ENCODE measurements at regions of chr17 and their contacts with region 1.

Region 1: DNA sequence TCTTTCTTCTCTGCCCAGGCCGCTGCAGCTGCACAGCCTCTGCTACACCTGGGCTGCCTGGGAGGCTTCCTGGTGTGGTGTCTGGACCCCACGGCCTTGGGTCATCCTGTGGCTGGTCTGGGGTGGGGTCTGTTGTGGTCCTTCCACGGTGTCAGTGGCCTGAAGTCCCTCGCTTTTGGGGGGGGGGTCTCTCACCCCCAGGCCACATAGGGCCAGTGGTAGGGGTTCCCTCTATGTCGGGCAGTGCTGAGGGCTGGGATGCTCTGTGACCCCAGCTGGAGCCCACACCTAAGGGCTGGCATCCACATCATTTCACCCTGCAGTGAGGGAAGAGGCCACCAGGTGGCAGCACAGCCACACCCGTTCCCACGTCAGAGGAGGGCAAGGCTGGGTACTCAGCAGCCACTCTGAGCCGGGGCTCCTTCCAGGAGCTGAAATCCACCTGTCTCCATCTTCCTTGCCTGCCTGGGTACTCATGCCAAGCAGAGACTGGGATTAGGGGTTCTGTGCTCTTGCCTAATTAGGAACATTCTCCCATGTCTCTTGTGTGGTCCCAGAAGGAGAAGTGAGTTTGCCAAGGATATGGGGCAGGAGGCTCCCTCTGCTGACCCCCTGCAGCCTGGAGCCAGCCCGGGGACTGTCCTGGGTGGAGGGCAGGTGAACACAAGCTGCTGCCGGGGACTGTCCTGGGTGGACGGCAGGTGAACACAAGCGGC is 13.0 kb downstream of the ENGASE start:
- DNase-seq: peak; percentile 68 to 96
- ATAC-seq: peak; percentile 70 to 90
- H3K4me3 ChIP-seq: no peak overlapping the region
- H3K27ac ChIP-seq: no peak overlapping the region
- H3K4me1 ChIP-seq: no peaks in the 10 kb centered on the region
- CTCF ChIP-seq: peak; percentile 95
- EP300 ChIP-seq: no peak
- POLR2A ChIP-seq: no peak
- RAD21 ChIP-seq: peak; percentile 88 to 89

Region 2: DNA sequence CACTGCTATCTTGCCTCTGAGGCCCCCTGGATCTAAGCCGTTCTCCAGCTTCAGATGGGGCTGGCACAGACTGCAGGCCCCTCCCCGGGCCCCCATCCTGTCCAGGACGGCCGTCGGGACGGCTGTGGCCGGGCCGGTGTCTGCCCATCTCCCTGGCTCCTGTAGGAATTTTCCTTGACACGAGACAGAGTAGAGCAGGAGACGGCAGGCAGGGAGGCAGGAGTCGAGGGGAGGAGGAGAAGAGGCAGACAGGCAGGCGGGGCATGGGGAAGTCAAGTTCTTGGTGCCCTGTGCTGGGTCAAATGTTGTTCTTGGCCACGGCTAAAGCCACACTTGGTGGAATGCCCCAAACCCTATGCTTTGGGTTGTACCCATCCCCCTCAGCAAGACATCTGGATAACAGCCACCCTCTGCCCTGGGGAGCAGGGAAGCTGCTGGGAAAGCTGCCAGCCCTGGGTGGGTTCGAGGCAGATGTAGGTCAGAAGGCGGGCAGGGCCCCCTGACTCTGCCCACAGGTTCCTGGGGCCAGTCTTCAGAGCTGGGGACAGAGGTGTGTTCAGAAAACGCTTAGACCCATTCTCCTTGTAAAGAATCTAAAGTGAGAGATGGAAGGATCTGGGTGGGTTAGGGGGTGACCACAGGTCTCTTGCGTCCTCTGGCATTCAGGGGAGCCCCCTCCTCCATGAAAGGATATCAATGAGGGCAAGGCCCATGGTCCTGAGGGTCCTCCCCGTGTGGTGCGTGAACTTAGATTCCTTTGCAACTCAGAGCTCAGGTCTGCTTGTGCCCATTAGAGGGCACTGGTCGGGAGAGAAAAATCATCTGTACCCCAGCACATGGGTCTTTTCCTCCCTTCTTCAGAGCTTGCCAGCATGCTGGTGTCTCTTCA is 59.4 kb before region 1 on chr17:
- CTCF ChIA-PET with region 1: interaction called, 200 read pairs
- POLR2A ChIA-PET with region 1: no interaction called
- DNase-seq: no peak
- ATAC-seq: peak in 1 of 2 experiments; percentile 34; a peak in 3 of 6 replicates
- H3K4me3 ChIP-seq: no peak overlapping the region
- H3K27ac ChIP-seq: peak overlapping the region; percentile 78 to 88
- H3K4me1 ChIP-seq: peaks cover 51% of the 10 kb centered on the region
- CTCF ChIP-seq: peak; percentile 48; the same call in 1 of the 3 replicates
- EP300 ChIP-seq: no peak
- POLR2A ChIP-seq: no peak
- RAD21 ChIP-seq: 0 out of 5 replicates have a peak, but pooled peaks have one; percentile 27 to 32

Region 3: GRCh38 chr17:79057737-79058385 is 29.7 kb before region 1 on chr17:
- CTCF ChIA-PET with region 1: interaction called, 289 read pairs
- POLR2A ChIA-PET with region 1: no interaction called
- DNase-seq: no peak
- ATAC-seq: peak; percentile 25 to 39; a peak in 1 of 6 replicates
- H3K4me3 ChIP-seq: no peak overlapping the region
- H3K27ac ChIP-seq: no peak overlapping the region
- H3K4me1 ChIP-seq: no peaks in the 10 kb centered on the region
- CTCF ChIP-seq: no peak
- EP300 ChIP-seq: no peak
- POLR2A ChIP-seq: no peak
- RAD21 ChIP-seq: no peak

Region 4: GRCh38 chr17:79102214-79102613 is 14.6 kb after region 1 on chr17:
- CTCF ChIA-PET with region 1: interaction called, 52 read pairs
- POLR2A ChIA-PET with region 1: interaction called, 3 read pairs
- DNase-seq: no peak
- ATAC-seq: no peak
- H3K4me3 ChIP-seq: no peak overlapping the region
- H3K27ac ChIP-seq: no peak overlapping the region
- H3K4me1 ChIP-seq: 0 out of 3 replicates have a peak, but pooled peaks cover 4% of the 10 kb centered on the region
- CTCF ChIP-seq: no peak
- EP300 ChIP-seq: no peak
- POLR2A ChIP-seq: no peak
- RAD21 ChIP-seq: no peak

Region 5: DNA sequence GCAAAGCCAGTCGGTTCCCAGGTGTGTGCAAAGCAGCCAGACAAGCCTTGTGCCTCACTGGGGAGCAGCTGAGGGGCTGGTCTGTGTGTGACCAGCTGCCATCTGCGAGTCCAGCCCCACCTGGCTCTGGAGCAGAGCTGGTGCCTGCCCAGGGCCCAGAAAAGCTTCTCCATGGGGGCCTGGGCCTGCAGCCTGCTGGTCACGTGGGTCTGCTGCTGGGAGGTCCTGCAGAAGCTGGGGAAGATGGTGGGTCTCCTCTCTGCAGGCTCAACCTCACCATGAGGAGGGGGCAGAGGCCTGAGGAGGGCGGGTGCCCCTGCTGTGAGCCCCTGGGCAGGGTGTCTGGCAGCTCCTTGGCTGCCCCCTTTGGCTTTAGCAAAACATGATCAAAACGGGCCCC is 59.0 kb after region 1 on chr17:
- CTCF ChIA-PET with region 1: interaction called, 11 read pairs
- POLR2A ChIA-PET with region 1: no interaction called
- DNase-seq: no peak
- ATAC-seq: no peak
- H3K4me3 ChIP-seq: no peak overlapping the region
- H3K27ac ChIP-seq: no peak overlapping the region
- H3K4me1 ChIP-seq: peaks cover 10% of the 10 kb centered on the region; the same call in 1 of the 3 replicates
- CTCF ChIP-seq: no peak
- EP300 ChIP-seq: no peak
- POLR2A ChIP-seq: no peak
- RAD21 ChIP-seq: no peak

Region 6: DNA sequence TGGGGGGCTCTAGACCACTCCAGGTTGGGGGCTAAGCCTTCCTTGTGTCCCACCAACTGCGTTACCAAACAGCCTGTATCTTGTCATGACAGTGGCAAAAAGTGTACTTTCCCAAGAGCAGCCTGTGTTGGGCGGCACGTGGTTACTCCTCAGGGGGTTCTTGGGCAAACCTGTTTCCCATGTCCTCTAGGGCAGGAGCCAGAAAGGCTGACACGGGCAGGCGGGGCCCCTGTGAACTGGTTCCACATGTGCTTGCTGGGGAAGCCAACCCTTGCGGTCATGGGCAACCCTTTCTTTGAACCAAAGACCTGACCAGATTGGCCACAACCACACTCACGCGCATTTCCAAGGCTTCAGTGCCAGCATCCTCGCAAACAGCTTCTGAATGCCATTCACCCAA is 294.7 kb after region 1 on chr17:
- CTCF ChIA-PET with region 1: interaction called, 555 read pairs
- POLR2A ChIA-PET with region 1: no interaction called
- DNase-seq: no peak
- ATAC-seq: no peak
- H3K4me3 ChIP-seq: no peak overlapping the region
- H3K27ac ChIP-seq: no peak overlapping the region
- H3K4me1 ChIP-seq: no peaks in the 10 kb centered on the region
- CTCF ChIP-seq: no peak
- EP300 ChIP-seq: no peak
- POLR2A ChIP-seq: no peak
- RAD21 ChIP-seq: no peak